ENCODE measurements at regions of chr3 and their contacts with region 1.

Region 1: GRCh38 chr3:40524568-40525285 is at the start of gene ZNF621:
- DNase-seq: peak; percentile 89
- ATAC-seq: peak; percentile 97
- H3K4me3 Mint-ChIP-seq: peak within 1 kb of the TSS; percentile 91
- H3K27ac Mint-ChIP-seq: peak within 1 kb of the TSS; percentile 94
- H3K4me1 Mint-ChIP-seq: peaks cover 24% of the 10 kb centered on the region
- H3K27me3 Mint-ChIP-seq: no peaks in the 10 kb centered on the region
- total RNA-seq, gene ZNF621: 17.8 to 18.7 TPM

Region 2: DNA sequence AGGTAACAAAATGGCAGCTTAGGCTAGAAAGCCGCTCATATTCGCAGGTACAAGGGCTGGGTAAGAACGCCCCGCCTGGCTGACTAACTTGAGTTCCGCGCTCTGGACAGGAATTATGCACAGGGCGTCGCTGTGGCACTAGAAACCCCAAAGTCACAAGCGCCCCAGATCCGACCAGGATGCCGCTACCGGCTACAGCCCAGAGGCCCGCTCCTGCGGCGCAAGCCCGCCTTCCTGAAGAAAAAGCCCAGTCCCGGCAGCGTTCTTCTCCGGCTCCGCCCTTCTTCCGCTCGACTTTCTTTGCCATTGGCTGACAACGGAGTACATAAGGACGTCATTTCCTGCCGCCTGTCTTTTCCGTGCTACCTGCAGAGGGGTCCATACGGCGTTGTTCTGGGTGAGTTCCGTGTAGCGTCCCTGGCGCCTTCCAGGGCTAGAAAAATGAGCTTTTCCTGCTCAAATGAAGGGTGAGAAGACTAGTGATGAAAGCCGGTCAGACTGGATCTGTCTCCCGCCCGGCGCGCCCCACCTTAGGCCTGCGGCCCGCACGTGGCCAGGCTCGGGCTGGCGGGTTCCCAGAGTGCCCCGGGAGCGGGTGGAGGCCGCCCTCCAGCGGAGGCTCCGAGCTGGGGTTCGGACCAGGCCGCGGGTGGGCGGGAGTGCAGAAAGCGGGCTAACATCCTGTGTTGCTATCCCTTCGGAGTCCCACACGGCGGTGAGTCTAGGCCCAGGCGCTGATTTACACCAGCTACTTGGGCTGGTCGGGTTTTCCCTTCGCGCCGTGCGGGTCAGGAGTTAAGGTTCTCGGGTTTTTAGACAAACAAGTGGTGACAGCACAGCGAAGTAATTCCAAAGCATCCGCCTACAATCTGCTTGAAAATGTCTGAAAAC is 1118.1 kb before region 1 on chr3 and contains the start of gene RPSA:
- CTCF ChIA-PET with region 1: no interaction called
- POLR2A ChIA-PET with region 1: no interaction called
- intact Hi-C with region 1: loop called in 1 of 2 experiments (anchors 10 kb)
- DNase-seq: peak; percentile 98
- ATAC-seq: peak; percentile 93
- H3K4me3 Mint-ChIP-seq: peak within 1 kb of the TSS; percentile 98
- H3K27ac Mint-ChIP-seq: peak within 1 kb of the TSS; percentile 98
- H3K4me1 Mint-ChIP-seq: peaks cover 39% of the 10 kb centered on the region
- H3K27me3 Mint-ChIP-seq: no peaks in the 10 kb centered on the region
- total RNA-seq, gene RPSA: 2,498 to 3,023 TPM

Region 3: DNA sequence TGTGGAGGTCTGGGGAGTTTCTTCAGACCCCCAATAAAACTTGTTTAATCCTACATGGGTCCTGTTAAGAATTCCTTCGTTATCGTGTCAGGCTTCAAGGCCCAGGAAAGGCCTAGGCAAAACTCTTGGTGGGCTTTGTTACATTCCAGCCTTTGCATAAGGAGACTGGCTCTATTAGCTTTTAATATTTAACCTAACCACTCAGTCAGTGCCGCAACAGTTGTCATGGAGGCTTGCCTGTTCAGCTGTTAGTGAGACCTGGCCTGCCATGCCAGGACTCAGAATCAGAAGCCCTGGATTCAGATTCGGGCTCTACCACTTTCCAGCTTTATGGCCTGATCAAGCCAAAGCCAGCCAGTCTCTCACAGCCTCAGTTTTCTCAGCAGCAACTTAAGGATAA is 195.7 kb before region 1 on chr3:
- CTCF ChIA-PET with region 1: no interaction called
- POLR2A ChIA-PET with region 1: no interaction called
- intact Hi-C with region 1: loop called in 1 of 2 experiments (anchors 5 kb)
- DNase-seq: no peak
- ATAC-seq: no peak
- H3K4me3 Mint-ChIP-seq: no peak overlapping the region
- H3K27ac Mint-ChIP-seq: no peak overlapping the region
- H3K4me1 Mint-ChIP-seq: peaks cover 3% of the 10 kb centered on the region
- H3K27me3 Mint-ChIP-seq: no peaks in the 10 kb centered on the region

Region 4: DNA sequence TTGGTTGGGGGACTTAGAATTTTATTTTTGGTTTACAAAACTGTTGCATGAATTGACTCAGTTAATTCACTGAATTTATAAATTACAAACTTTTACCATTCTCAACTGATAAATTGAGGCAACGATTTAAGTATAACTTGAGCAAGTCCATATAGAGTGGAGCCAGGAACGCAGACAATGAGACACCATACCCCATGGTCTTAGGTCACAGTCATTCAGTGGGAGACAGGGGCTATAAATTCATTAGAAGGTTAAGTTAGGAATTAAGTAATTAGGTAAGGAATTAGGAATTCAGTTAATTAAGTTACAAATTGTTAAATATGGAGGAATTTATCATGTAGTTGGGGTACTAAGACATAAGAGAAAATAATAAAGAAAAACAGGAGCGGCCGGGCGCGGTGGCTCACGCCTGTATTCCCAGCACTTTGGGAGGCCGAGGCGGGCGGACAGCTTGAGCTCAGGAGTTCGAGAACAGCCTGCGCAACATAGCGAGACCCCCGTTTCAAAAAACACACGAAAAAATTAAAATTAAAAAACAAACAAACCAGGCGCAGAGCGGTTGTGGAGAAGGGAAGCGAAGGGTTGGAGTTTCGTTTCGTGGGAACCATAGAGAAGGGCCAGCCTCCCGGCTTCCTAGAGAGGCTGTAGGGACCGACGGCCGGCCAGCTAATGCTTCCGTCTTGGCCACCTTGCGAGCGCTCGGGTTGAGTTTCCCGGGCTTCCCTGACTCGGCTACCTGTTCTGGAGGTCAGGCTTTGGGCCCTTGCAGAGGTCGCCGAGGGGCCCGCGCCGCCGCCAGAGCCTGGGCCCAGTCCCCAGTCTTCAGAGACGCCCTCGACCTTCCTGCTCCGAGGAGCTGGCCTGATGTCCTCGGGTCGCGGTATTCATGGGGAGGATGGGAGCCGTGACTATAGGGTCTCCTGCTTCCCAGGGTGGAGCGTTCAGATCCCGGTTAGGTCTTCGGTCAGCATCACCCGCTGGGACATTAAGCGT is 48.0 kb before region 1 on chr3 and contains the start of gene ZNF619:
- CTCF ChIA-PET with region 1: no interaction called
- POLR2A ChIA-PET with region 1: interaction called, 4 read pairs
- intact Hi-C with region 1: loop called (anchors 1 to 5 kb)
- DNase-seq: peak; percentile 64
- ATAC-seq: peak; percentile 79
- H3K4me3 Mint-ChIP-seq: peak within 1 kb of the TSS; percentile 80
- H3K27ac Mint-ChIP-seq: peak within 1 kb of the TSS; percentile 83
- H3K4me1 Mint-ChIP-seq: peaks cover 15% of the 10 kb centered on the region
- H3K27me3 Mint-ChIP-seq: no peaks in the 10 kb centered on the region
- total RNA-seq, gene ZNF619: 5.6 to 7.0 TPM

Region 5: GRCh38 chr3:40505599-40506462 is 18.9 kb before region 1 on chr3 and contains the start of gene ZNF620:
- CTCF ChIA-PET with region 1: interaction called, 5 read pairs
- POLR2A ChIA-PET with region 1: interaction called, 14 read pairs
- intact Hi-C with region 1: loop called (anchors 1 to 2 kb)
- DNase-seq: peak; percentile 59
- ATAC-seq: peak; percentile 67
- H3K4me3 Mint-ChIP-seq: peak within 1 kb of the TSS; percentile 86
- H3K27ac Mint-ChIP-seq: peak within 1 kb of the TSS; percentile 92
- H3K4me1 Mint-ChIP-seq: peaks cover 29% of the 10 kb centered on the region
- H3K27me3 Mint-ChIP-seq: no peaks in the 10 kb centered on the region
- total RNA-seq, gene ZNF620: 3.8 to 3.9 TPM